CD14-positive monocyte (primary cell): ENCODE measurements at regions of chr17 and their contacts with region 1.

Region 1: DNA sequence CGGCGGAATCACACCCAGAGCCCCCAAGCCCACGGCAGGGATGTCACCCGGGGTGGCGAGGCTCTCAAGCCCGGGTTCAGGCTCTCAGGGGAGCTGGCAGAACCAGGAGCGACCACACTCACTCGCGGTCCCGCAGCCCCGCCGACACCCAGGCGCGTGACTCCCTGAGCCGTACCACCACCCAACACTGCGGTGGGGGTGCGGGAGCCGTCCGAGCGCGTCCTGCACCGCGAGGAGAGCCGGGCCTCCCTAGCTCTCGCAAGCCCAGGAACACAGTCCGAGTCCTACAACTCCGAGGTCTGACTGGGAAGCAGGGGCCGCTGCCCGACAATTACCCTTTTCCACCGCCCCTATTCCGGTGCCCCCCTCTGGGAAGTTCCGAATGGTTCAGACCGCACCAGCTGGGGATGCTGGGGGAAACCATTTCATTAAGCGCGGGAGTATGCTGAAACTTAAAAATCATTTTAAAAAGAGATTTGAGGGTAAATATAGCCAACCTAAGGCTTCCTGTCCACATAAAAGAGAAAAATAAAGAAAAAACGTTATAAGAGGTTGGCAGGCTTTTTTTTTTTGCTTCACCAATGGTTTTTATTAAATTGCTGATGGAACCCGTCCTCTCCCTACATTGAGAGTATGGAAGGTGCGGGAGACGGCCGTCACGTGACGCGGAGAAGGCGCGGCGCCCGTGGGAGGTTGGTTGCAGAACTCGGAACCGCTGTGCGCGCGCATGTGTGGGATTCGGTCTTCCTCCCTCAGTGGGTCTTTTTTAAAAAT is at the start of gene FLCN:
- DNase-seq: peak; percentile 89 to 93 (median 91)
- H3K4me3 ChIP-seq: peak within 1 kb of the TSS; percentile 94 to 98 (median 95)
- H3K4me3 Mint-ChIP-seq: peak within 1 kb of the TSS; percentile 95 to 97
- H3K27ac ChIP-seq: peak within 1 kb of the TSS; percentile 76 to 100
- H3K27ac Mint-ChIP-seq: peak within 1 kb of the TSS; percentile 94 to 99 (median 99)
- H3K4me1 ChIP-seq: peaks cover 20 to 26% of the 10 kb centered on the region in 2 donors
- H3K4me1 Mint-ChIP-seq: peaks cover 26% of the 10 kb centered on the region
- H3K27me3 ChIP-seq: no peaks in the 10 kb centered on the region
- H3K27me3 Mint-ChIP-seq: peaks cover 0 to 5% (median 4%) of the 10 kb centered on the region in 3 donors
- CTCF ChIP-seq: no peak
- polyA plus RNA-seq, gene FLCN: 5.8 to 46.9 (median 8.0) TPM

Region 2: DNA sequence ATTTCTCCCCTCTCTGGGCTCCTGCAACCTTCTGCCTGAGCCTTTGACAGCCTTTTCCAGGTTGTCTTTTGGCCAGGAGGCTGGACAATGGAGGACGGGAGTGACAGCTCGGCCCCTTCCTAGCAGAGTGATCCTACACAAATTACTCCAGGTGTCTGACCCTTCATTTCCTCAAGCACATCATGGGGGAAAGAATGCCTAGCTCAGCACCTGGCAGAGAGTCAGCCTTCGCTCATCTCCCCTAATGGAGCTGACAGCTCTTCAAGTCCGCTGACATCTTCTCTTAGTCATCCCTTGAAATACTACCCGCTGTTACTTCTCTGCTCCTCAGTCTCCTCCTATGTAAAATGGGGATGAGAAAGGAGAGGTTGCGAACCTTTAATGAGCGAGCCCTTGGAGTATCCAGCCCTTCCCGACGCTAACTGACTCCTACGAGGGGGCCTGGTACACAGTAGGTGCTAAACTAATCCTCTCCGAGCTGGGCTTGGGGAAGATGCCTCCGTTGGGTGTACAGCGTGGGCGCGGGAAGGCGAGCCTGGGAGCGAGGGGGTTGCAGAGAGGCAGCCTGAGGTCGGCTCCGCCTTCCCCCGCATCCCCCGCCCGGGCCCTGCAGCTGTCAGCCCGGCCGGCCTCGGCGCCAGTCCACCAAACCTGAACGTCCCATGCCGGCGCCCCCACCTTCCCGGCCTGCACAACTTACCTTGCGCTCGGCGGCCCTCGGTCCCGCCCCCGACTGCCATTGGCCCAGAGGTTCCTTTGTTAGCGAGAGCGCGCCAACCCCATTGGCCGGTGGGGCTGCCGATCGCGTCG is 195.4 kb before region 1 on chr17:
- intact Hi-C with region 1: loop called in 1 of 2 experiments (anchors 10 kb)
- DNase-seq: peak; percentile 76 to 86 (median 85)
- H3K4me3 ChIP-seq: peak overlapping the region; percentile 40 to 80 (median 67)
- H3K4me3 Mint-ChIP-seq: peak overlapping the region; percentile 72 to 81
- H3K27ac ChIP-seq: no peak overlapping the region
- H3K27ac Mint-ChIP-seq: peak overlapping the region in 1 of 7 donors; percentile 6
- H3K4me1 ChIP-seq: peaks cover 39 to 46% of the 10 kb centered on the region in 2 donors
- H3K4me1 Mint-ChIP-seq: peaks cover 40% of the 10 kb centered on the region
- H3K27me3 ChIP-seq: peaks cover 0 to 10% of the 10 kb centered on the region in 2 donors
- H3K27me3 Mint-ChIP-seq: peaks cover 18 to 27% (median 24%) of the 10 kb centered on the region in 3 donors
- CTCF ChIP-seq: no peak

Region 3: DNA sequence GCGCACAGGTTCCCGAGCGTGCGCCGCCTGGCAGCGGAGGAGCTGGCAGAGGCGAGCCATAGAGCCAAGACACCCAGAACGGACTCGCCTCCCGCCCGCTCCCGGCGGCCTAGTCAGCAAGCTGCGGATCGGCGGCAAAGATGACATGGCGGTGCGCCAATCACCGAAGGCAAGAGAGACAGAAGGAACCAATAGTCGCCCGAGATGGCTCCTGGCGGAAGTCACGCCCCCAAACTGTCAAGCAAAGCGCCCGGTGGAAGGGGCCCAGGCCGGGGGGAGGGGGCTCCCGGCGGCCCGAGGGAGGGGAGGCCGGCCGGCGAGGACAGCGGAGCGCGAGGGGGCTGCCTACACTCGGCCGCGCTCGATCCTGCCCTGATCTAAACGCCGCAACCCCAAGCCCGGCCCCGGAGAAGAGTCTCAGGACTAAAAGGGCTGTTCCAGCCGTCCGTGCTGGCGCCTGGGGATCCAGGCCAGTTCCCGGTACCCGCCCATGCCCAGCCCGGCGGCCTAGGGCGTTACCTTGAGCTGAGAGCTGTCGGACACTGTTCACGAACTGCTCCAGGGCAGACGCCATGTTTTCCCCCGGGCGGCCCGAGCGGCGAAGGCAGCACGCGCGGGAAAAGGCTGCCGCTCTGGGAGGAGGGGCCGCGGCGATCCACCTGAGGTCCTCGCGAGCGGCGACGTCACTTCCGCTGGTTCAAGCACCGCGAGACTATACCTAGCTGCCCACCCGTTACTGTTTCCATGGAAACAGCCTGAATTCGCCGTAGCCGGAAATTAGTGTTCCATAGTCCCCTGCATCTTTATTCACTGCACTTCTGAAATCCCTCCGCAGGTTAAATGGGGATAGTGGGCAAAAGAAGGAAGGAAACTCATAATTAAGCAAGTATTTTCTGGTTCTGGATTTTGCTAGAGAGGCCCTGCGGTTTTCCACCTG is 43.7 kb after region 1 on chr17 and contains the start of gene COPS3:
- intact Hi-C with region 1: loop called (anchors 2 to 5 kb)
- DNase-seq: peak; percentile 93 to 97 (median 96)
- H3K4me3 ChIP-seq: peak within 1 kb of the TSS; percentile 57 to 94 (median 87)
- H3K4me3 Mint-ChIP-seq: peak within 1 kb of the TSS; percentile 79 to 96
- H3K27ac ChIP-seq: peak within 1 kb of the TSS; percentile 90 to 95
- H3K27ac Mint-ChIP-seq: peak within 1 kb of the TSS; percentile 89 to 97 (median 95)
- H3K4me1 ChIP-seq: peaks cover 54 to 64% of the 10 kb centered on the region in 2 donors
- H3K4me1 Mint-ChIP-seq: peaks cover 54% of the 10 kb centered on the region
- H3K27me3 ChIP-seq: no peaks in the 10 kb centered on the region
- H3K27me3 Mint-ChIP-seq: peaks cover 0 to 2% (median 0%) of the 10 kb centered on the region in 3 donors
- CTCF ChIP-seq: no peak
- polyA plus RNA-seq, gene COPS3: 47.6 to 122 (median 117) TPM